ENCODE measurements at regions of chr4 and their contacts with region 1.

Region 1: GRCh38 chr4:147837435-147837834 is 105.5 kb downstream of the ARHGAP10 start:
- DNase-seq: no peak
- H3K4me3 ChIP-seq: no peak overlapping the region
- H3K27ac ChIP-seq: no peak overlapping the region
- H3K4me1 ChIP-seq: peaks cover 12% of the 10 kb centered on the region
- H3K27me3 ChIP-seq: no peaks in the 10 kb centered on the region
- CTCF ChIP-seq: peak; percentile 36 to 49

Region 2: DNA sequence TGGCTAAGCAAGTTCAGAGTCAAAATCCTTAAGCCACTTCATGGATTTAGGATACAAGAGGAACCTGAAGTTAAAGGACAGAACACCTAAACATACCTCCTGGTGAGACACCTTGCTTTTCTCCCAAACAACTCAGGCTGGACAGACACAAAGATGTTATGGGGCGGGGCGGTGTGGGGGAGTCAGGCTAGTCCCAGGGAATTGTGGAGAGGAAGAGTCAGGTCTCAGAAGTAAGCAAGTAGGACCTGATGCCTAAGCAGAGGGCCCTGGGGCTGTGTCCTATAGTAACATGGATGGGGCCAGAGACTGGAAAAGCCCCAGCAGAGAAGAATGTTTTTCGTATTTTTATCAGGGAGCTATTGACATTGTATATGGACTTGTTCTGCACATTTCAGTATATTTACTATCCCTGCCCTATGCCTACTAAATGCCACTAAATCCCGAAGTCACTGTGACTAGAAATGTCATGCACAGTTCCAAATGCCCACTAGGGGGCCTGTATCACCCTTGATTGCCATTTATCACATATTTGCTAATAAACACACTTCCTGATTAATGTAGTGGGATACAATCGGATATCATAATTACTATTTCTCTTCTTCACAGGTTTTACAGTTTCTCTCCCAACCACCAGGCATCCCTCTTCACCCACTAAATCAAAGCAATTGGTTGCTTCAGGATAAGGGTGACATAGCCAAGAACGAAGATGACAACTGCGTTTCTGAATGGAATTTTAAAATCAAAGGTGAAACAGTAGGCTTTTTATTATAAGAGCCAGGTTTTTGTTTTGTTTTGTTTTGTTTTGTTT is 129.4 kb before region 1 on chr4:
- CTCF ChIA-PET with region 1: no interaction called
- dilution Hi-C with region 1: no loop called
- in situ Hi-C with region 1: no loop called
- intact Hi-C with region 1: loop called (anchors 2 kb)
- DNase-seq: peak; percentile 30
- H3K4me3 ChIP-seq: no peak overlapping the region
- H3K27ac ChIP-seq: no peak overlapping the region
- H3K4me1 ChIP-seq: no peaks in the 10 kb centered on the region
- H3K27me3 ChIP-seq: no peaks in the 10 kb centered on the region
- CTCF ChIP-seq: peak; percentile 86 to 92

Region 3: GRCh38 chr4:147731580-147732517 is 105.6 kb before region 1 on chr4 and contains the start of gene ARHGAP10:
- CTCF ChIA-PET with region 1: interaction called, 3 read pairs
- dilution Hi-C with region 1: loop called (anchors 5 kb)
- in situ Hi-C with region 1: no loop called
- intact Hi-C with region 1: loop called (anchors 2 kb)
- DNase-seq: peak; percentile 82
- H3K4me3 ChIP-seq: peak within 1 kb of the TSS; percentile 85 to 91 (median 86)
- H3K27ac ChIP-seq: peak within 1 kb of the TSS; percentile 80
- H3K4me1 ChIP-seq: peaks cover 48% of the 10 kb centered on the region
- H3K27me3 ChIP-seq: no peaks in the 10 kb centered on the region
- CTCF ChIP-seq: no peak
- total RNA-seq, gene ARHGAP10: 22.5 to 28.8 TPM

Region 4: GRCh38 chr4:147822128-147822527 is 15.3 kb before region 1 on chr4:
- CTCF ChIA-PET with region 1: no interaction called
- dilution Hi-C with region 1: no loop called
- in situ Hi-C with region 1: no loop called
- intact Hi-C with region 1: loop called (anchors 2 kb)
- DNase-seq: peak; percentile 98
- H3K4me3 ChIP-seq: no peak overlapping the region
- H3K27ac ChIP-seq: peak overlapping the region; percentile 80
- H3K4me1 ChIP-seq: peaks cover 60% of the 10 kb centered on the region
- H3K27me3 ChIP-seq: no peaks in the 10 kb centered on the region
- CTCF ChIP-seq: no peak